ENCODE measurements at regions of chr9 and their contacts with region 1.

Region 1: GRCh38 chr9:130860458-130861316 is 25.6 kb downstream of the ABL1 start:
- DNase-seq: peak; percentile 87
- ATAC-seq: peak; percentile 91

Region 2: DNA sequence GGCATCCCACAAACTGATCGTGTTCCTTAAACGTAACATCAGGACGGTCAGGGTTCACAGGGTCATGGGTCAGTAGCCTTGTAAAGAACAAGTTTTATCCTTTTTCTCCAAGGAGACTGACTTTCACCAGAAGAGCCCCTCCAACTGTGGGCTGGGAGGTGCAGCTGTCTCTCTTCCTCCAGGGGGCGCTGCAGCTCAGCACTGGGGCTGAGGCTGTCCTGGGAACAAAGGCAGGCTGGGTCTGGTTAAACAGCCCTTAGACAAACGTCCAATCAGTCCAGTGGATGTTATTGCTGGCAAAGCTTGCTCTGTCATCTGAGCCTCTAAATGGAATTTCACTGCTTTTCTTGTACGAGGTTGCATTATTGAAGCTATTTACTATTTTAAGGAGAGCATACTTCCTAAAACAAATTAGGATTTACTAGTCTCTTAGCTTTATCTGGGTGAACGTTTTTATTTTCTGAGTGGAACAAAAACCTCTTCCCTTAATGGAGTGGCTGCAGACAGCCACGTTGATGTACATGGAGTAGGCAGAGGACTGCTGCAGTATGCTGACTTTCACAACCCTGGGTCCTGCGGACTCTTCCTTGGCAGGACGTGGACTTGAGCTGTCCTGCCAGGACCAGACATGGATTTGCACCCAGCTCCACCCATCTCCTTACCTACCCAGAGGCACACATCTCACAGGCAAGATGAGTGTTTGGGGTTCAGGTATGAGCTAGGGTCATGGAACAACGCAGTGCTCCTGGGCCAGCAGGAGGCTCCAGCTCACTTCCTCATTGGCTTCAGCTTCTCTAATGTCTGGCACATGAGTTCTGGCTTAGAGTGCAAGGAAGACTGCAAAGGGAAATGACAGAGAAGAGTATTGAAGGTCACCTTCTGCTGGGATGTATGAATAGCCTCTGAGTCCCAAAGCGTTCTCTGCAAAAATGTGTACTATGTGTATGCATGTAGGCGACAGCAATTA is 159.3 kb before region 1 on chr9:
- intact Hi-C with region 1: loop called (anchors 5 kb)
- DNase-seq: peak; percentile 85
- ATAC-seq: peak; percentile 94

Region 3: GRCh38 chr9:130770679-130771442 is 89.8 kb before region 1 on chr9:
- intact Hi-C with region 1: loop called (anchors 5 kb)
- DNase-seq: no peak
- ATAC-seq: peak; percentile 78

Region 4: DNA sequence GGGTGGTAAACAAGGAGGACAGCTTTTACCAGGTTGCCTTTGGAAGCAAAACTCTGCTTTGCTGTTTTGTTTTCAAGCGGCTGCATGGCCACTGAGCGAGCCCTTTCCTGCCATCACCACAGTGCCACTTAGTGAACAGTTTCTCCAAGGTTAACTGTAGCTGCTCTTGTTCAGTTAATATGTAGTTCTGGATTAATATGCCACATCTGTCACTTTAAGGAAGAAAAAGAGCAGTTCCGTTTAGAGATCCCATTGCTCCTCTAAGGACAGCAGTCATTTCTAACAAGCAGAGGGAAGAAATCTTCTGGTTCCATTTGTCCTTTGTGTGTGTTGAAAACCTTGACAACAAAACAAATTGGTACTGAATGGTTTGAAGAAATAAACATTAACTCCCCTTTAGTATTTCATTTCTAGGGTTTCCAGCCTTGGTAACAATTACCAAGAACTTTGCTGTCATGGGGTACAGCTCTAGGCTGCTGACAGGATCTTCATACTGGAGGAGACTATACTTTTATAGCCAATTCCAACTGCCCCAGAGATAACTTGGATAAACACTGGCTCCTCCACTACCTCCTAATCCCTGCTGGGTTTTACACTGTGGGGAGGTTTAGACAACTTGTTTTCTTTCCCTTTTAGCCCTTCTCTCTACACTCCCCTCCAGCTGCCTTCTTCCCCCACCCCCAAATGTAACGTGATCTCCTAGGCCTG is 35.9 kb before region 1 on chr9:
- intact Hi-C with region 1: loop called (anchors 1 kb)
- DNase-seq: no peak
- ATAC-seq: peak; percentile 92